T-cell (primary cell): ENCODE measurements at regions of chr1 and their contacts with region 1.

Region 1: DNA sequence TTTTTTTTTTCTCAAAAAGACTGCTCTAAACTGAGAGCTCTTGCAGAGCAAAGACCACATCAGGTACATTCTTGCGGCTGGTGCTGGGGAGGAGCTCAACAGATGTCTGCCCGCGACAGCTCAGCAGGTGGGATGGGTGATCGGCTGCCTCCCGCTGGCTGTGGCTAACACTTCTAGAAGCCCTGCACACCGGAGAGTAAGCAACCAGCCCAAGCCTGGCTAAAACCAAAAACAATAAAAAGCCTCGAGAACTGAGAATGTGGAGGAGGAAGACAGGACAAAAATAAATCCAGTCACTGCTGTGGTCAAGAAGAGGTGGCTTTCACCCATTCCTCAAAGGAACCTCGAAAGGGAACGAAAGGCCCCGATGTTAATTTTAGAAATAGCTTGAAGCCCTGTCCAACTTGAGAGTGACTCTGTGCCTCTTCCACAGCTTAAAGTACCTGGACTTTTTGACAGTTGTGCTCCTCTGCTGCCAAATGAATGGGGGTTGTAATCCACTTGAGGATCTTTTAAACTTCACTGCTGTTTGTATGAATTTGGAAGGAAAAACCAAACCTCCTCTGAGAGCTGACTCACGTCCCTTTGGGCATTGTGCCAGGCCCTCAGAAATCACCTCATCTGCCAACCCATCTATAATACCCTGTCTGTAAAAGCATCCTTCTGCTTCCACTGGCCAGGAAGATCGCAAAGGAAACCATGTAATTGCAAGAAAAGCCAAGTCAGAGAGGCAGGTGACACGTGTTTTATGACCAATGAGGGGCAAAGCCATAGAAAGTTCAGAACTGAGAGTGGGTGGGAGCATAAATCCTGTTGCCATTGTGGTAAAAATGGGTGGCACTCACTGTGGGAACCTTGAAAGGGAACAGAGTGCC is 78.6 kb downstream of the KCNN3 start:
- DNase-seq: peak; percentile 63 to 93 (median 84)
- ATAC-seq: peak; percentile 98 to 99 (median 98)
- H3K4me3 ChIP-seq: no peak overlapping the region
- H3K4me3 Mint-ChIP-seq: peak overlapping the region; percentile 58 to 70 (median 63)
- H3K27ac ChIP-seq: peak overlapping the region; percentile 61
- H3K27ac Mint-ChIP-seq: peak overlapping the region; percentile 92 to 95
- H3K4me1 ChIP-seq: peaks cover 24 to 31% of the 10 kb centered on the region in 2 experiments
- H3K4me1 Mint-ChIP-seq: peaks cover 34 to 44% (median 40%) of the 10 kb centered on the region in 3 donors
- H3K27me3 ChIP-seq: peaks cover 0 to 8% of the 10 kb centered on the region in 2 experiments
- H3K27me3 Mint-ChIP-seq: peaks cover 0 to 4% of the 10 kb centered on the region in 2 donors

Region 2: GRCh38 chr1:154669464-154670282 is 121.9 kb before region 1 on chr1:
- CTCF ChIA-PET with region 1: interaction called, 4 to 11 read pairs
- POLR2A ChIA-PET with region 1: no interaction called
- DNase-seq: peak; percentile 44 to 85 (median 67)
- ATAC-seq: peak; percentile 97 to 100 (median 98)
- H3K4me3 ChIP-seq: no peak overlapping the region
- H3K4me3 Mint-ChIP-seq: no peak overlapping the region
- H3K27ac ChIP-seq: no peak overlapping the region
- H3K27ac Mint-ChIP-seq: peak overlapping the region in 1 of 2 donors; percentile 22
- H3K4me1 ChIP-seq: no peaks in the 10 kb centered on the region
- H3K4me1 Mint-ChIP-seq: no peaks in the 10 kb centered on the region
- H3K27me3 ChIP-seq: peaks cover 0 to 3% of the 10 kb centered on the region in 2 experiments
- H3K27me3 Mint-ChIP-seq: no peaks in the 10 kb centered on the region

Region 3: GRCh38 chr1:154760469-154760933 is 31.0 kb before region 1 on chr1:
- CTCF ChIA-PET with region 1: interaction called in 1 of 2 experiments, 14 read pairs
- POLR2A ChIA-PET with region 1: interaction called in 1 of 2 experiments, 4 read pairs
- DNase-seq: peak; percentile 52 to 91 (median 77)
- ATAC-seq: peak; percentile 92 to 95 (median 94)
- H3K4me3 ChIP-seq: peak overlapping the region; percentile 39 to 67
- H3K4me3 Mint-ChIP-seq: peak overlapping the region; percentile 39 to 62 (median 59)
- H3K27ac ChIP-seq: no peak overlapping the region
- H3K27ac Mint-ChIP-seq: no peak overlapping the region
- H3K4me1 ChIP-seq: peaks cover 21 to 27% of the 10 kb centered on the region in 2 experiments
- H3K4me1 Mint-ChIP-seq: peaks cover 32 to 39% (median 37%) of the 10 kb centered on the region in 3 donors
- H3K27me3 ChIP-seq: peaks cover 0 to 12% of the 10 kb centered on the region in 2 experiments
- H3K27me3 Mint-ChIP-seq: peaks cover 0 to 18% of the 10 kb centered on the region in 2 donors

Region 4: GRCh38 chr1:154936555-154937084 is 145.1 kb after region 1 on chr1 and contains the start of gene PMVK:
- CTCF ChIA-PET with region 1: no interaction called
- POLR2A ChIA-PET with region 1: interaction called in 1 of 2 experiments, 12 read pairs
- DNase-seq: peak; percentile 90 to 98 (median 95)
- ATAC-seq: peak; percentile 79 to 94 (median 90)
- H3K4me3 ChIP-seq: peak within 1 kb of the TSS; percentile 75 to 96
- H3K4me3 Mint-ChIP-seq: peak within 1 kb of the TSS; percentile 96 to 98 (median 97)
- H3K27ac ChIP-seq: peak within 1 kb of the TSS; percentile 97
- H3K27ac Mint-ChIP-seq: peak within 1 kb of the TSS; percentile 97 to 99
- H3K4me1 ChIP-seq: peaks cover 19 to 56% of the 10 kb centered on the region in 2 experiments
- H3K4me1 Mint-ChIP-seq: peaks cover 51 to 61% (median 57%) of the 10 kb centered on the region in 3 donors
- H3K27me3 ChIP-seq: no peaks in the 10 kb centered on the region
- H3K27me3 Mint-ChIP-seq: no peaks in the 10 kb centered on the region
- total RNA-seq, gene PMVK: 12.6 to 24.9 (median 22.4) TPM